PC-9 (cell line): ENCODE measurements at regions of chr7 and their contacts with region 1.

Region 1: GRCh38 chr7:100428967-100429636 is 529 bp upstream of the MEPCE start:
- DNase-seq: peak; percentile 97 to 100
- H3K4me3 ChIP-seq: peak overlapping the region; percentile 66
- H3K27ac ChIP-seq: peak overlapping the region; percentile 93
- H3K4me1 ChIP-seq: peaks cover 37% of the 10 kb centered on the region
- H3K27me3 ChIP-seq: no peaks in the 10 kb centered on the region
- CTCF ChIP-seq: no peak; the same call in 1 of the 2 replicates

Region 2: GRCh38 chr7:100101016-100101862 is 327.9 kb before region 1 on chr7 and contains the starts of genes AP4M1 and MCM7:
- CTCF ChIA-PET with region 1: no interaction called
- POLR2A ChIA-PET with region 1: interaction called, 5 read pairs
- intact Hi-C with region 1: loop called (anchors 1 kb)
- DNase-seq: peak; percentile 96 to 100
- H3K4me3 ChIP-seq: peak within 1 kb of the TSS; percentile 99
- H3K27ac ChIP-seq: peak within 1 kb of the TSS; percentile 85
- H3K4me1 ChIP-seq: peaks cover 19% of the 10 kb centered on the region
- H3K27me3 ChIP-seq: no peaks in the 10 kb centered on the region
- CTCF ChIP-seq: no peak
- total RNA-seq, gene AP4M1: 18.1 and 26.2 TPM in 2 replicates
- total RNA-seq, gene MCM7: 195 and 238 TPM in 2 replicates

Region 3: DNA sequence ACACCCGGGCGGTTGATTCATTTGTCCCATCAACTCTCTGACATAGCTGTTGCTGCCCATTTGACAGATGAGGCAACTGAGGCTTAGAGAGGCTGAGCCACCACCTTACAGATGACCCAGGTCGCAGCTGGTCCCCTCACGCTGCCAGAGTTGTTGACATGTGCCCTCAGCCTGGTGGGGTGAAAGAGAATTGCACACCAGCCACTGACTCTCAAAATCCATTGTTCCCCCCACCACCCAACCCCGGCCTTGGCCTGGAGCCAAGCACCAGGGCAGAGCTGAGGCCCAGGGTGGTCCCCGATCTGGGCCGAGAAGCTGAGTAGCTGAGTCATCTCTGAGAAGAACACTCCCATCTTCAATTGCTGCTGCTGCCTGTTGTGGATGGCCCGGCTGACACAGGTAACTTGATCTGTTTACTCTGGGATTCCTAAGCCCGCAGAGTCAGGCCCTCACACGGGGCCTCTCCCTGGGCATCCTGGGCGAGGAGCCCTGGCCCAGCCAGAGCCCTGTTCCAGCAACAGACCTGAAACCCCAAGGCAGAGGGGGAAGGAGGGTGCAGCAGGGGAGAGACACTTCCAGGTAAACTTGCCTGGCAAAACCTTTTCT is 181.8 kb before region 1 on chr7:
- CTCF ChIA-PET with region 1: no interaction called
- POLR2A ChIA-PET with region 1: interaction called, 4 read pairs
- intact Hi-C with region 1: loop called (anchors 1 kb)
- DNase-seq: peak; percentile 94 to 97
- H3K4me3 ChIP-seq: no peak overlapping the region
- H3K27ac ChIP-seq: peak overlapping the region; percentile 57
- H3K4me1 ChIP-seq: peaks cover 46% of the 10 kb centered on the region
- H3K27me3 ChIP-seq: no peaks in the 10 kb centered on the region
- CTCF ChIP-seq: no peak

Region 4: DNA sequence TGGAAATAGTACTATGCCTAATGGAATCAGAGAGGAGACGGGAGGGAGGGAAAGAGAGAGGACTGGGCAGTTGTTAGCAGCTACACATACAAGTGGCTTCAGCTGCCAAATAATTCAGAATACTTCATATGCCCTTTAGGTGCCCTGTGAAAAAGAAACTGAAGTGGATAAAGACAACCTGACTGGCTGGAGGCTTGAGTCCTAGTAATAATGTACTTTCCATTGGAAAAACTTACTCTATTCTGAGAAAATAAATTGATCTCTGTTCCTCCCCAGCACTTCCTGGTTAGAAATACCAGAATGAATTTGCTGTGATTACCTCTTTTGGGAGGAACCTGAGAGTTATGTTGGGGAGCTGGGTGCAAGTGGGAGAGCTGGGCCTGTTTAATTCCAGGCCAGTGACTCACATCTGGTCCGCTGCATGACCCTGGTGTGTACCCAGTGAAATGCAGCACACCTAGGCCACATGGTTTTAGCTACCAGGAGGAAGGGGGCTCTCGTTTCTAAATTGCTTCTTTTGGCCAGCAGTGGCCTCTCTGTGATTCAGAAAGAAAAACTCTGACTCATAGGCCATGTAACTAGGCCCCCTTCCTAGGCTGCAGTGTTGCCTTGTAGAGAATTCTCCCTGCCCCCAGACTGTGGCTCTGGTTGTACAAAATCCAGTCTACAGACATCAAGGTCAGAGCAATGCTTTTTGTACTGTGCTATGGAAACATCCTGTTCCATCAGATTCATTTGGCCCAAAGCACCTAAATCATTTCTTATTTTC is 116.4 kb after region 1 on chr7:
- CTCF ChIA-PET with region 1: no interaction called
- POLR2A ChIA-PET with region 1: interaction called, 15 read pairs
- intact Hi-C with region 1: no loop called
- DNase-seq: peak; percentile 89 to 96
- H3K4me3 ChIP-seq: peak overlapping the region; percentile 33; the same call in 1 of the 2 replicates
- H3K27ac ChIP-seq: peak overlapping the region; percentile 98
- H3K4me1 ChIP-seq: peaks cover 84% of the 10 kb centered on the region
- H3K27me3 ChIP-seq: no peaks in the 10 kb centered on the region
- CTCF ChIP-seq: no peak

Region 5: DNA sequence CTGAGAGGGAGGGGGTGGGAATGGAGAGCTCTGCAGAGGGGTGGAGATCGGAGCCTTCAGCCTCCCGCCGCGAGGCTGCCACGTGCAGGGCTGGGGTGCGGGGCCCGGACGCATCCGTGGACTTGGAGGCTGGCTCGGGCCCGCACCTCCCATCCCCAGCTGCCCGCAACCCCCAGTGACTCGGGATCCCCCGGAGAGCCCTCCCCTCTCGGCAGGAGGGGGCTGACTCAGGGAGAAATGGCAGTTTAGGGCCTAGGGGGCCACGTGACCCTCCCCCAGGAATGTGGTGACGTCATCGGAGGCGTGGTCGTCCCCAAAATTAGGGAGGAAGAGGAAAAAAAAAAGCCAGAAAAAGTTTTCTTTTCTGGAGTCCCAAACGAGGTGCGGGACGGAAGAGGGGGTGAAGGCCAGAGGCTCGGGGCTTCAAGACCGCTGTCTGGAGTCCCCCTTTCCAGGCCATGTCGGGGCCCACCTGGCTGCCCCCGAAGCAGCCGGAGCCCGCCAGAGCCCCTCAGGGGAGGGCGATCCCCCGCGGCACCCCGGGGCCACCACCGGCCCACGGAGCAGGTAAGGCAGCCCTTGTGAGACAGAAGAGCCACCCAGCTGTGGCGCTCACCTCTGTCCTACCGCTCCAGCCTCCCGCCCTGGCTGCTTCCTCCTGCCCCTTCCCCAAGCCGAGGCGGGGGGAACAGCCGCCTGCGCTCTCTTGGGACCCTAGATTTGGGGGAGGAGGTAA is 438.1 kb after region 1 on chr7 and contains the start of gene TRIP6:
- CTCF ChIA-PET with region 1: no interaction called
- POLR2A ChIA-PET with region 1: interaction called, 5 read pairs
- intact Hi-C with region 1: loop called (anchors 2 kb)
- DNase-seq: peak; percentile 80 to 92
- H3K4me3 ChIP-seq: peak within 1 kb of the TSS; percentile 99
- H3K27ac ChIP-seq: peak within 1 kb of the TSS; percentile 68
- H3K4me1 ChIP-seq: peaks cover 18% of the 10 kb centered on the region
- H3K27me3 ChIP-seq: no peaks in the 10 kb centered on the region
- CTCF ChIP-seq: no peak
- total RNA-seq, gene TRIP6: 89.3 and 91.4 TPM in 2 replicates